Vagina (tissue), 2 donors: ENCODE measurements at regions of chr17 and their contacts with region 1.

Region 1: GRCh38 chr17:61338000-61338798 is 61.4 kb upstream of the TBX2 start:
- DNase-seq: no peak
- H3K4me3 ChIP-seq: no peak overlapping the region
- H3K27ac ChIP-seq: peak overlapping the region; percentile 47
- H3K4me1 ChIP-seq: peaks cover 35% of the 10 kb centered on the region
- H3K27me3 ChIP-seq: no peaks in the 10 kb centered on the region
- CTCF ChIP-seq: no peak
- POLR2A ChIP-seq: no peak

Region 2: DNA sequence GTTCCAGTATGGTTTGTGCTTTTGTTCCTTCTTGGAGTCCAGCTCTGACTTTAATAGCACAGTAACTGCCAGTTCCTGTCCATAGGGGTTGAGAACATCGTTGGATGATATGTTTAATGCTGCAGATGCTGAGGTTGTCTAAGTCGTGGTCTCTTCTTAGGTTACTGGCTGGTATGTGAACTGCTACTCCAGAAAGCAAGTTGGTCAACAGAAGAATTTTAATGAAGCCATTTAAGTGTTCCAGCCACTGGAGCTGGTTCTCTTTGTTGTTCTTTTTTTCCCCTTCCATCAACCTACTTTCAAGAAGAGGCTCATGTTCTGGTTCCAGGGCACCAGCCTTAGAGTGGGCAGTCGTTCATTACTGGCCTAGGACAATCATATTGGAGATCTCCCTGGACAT is 78.8 kb before region 1 on chr17:
- intact Hi-C with region 1: loop called (anchors 5 kb)
- DNase-seq: no peak
- H3K4me3 ChIP-seq: no peak overlapping the region
- H3K27ac ChIP-seq: peak overlapping the region; percentile 56
- H3K4me1 ChIP-seq: peaks cover 24% of the 10 kb centered on the region
- H3K27me3 ChIP-seq: no peaks in the 10 kb centered on the region
- CTCF ChIP-seq: no peak
- POLR2A ChIP-seq: no peak

Region 3: DNA sequence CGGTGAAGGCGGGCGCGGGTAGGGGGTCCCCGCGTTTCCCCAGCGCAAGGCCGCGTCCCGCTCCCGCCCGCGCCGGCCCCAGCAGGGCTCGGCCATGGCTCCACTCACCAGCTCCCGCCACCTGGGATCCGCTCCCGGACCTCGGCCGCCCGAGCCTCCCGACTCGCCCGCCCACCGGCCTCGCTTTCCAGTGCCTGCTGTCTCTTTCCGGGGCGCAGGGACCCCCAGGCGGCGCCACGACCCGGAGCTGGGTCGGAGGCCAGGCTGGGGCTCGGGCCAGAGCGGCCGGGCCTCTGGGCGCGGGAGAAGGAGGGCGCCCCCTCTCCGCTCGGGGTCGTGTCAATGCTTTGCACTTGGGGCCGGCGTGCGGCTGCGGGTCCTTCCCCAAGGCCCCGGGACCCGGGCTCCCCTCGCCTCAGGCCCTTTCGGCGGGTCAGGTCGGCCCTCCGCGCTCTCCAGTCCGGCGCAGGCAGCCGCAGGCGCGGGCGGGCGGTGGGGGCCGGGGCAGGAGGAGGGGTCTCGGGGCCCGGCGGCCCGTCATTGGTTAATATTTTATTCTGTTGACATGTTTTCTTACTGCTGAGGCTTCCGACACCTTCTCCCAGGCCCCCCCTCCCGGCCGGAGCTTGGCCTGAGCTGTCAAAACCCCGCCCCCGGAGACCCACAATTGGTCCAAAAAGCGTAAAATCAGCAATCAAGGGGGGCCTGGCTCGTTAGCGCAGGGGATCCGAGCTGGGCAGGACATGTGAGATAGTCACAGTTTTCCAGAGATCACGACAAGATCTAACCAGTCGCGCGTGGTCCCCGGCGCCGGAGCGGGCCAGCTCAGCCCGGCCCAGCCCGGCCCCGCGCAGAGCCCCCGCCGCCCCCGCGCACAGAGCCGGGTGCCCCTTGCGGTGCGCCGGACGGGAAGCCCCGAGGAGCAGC is 61.2 kb after region 1 on chr17 and contains the start of gene TBX2:
- intact Hi-C with region 1: loop called (anchors 5 kb)
- DNase-seq: no peak
- H3K4me3 ChIP-seq: peak within 1 kb of the TSS; percentile 49 to 87
- H3K27ac ChIP-seq: peak within 1 kb of the TSS; percentile 83
- H3K4me1 ChIP-seq: peaks cover 55% of the 10 kb centered on the region
- H3K27me3 ChIP-seq: peaks cover 12% of the 10 kb centered on the region
- CTCF ChIP-seq: no peak
- POLR2A ChIP-seq: peak in 1 of 2 donors; percentile 44
- total RNA-seq, gene TBX2: 9.8 TPM

Region 4: GRCh38 chr17:61426013-61426730 is 88.0 kb after region 1 on chr17:
- intact Hi-C with region 1: no loop called
- DNase-seq: no peak
- H3K4me3 ChIP-seq: no peak overlapping the region
- H3K27ac ChIP-seq: no peak overlapping the region
- H3K4me1 ChIP-seq: no peaks in the 10 kb centered on the region
- H3K27me3 ChIP-seq: no peaks in the 10 kb centered on the region
- CTCF ChIP-seq: no peak
- POLR2A ChIP-seq: no peak